Endothelial cell of umbilical vein (primary cell): ENCODE measurements at regions of chr13 and their contacts with region 1.

Region 1: GRCh38 chr13:20160847-20161274 is at the start of gene GJA3:
- DNase-seq: no peak
- H3K4me3 ChIP-seq: peak within 1 kb of the TSS in 2 of 3 experiments; percentile 25 to 28
- H3K27ac ChIP-seq: no peak within 1 kb of the TSS
- H3K4me1 ChIP-seq: peaks cover 2% of the 10 kb centered on the region
- H3K27me3 ChIP-seq: peaks cover 40 to 71% of the 10 kb centered on the region in 2 experiments
- CTCF ChIP-seq: no peak
- POLR2A ChIP-seq: no peak
- total RNA-seq, gene GJA3: not detected in 2 replicates

Region 2: GRCh38 chr13:19822673-19823072 is 338.2 kb before region 1 on chr13:
- CTCF ChIA-PET with region 1: no interaction called
- POLR2A ChIA-PET with region 1: no interaction called
- dilution Hi-C with region 1: no loop called
- intact Hi-C with region 1: no loop called
- DNase-seq: no peak
- H3K4me3 ChIP-seq: no peak overlapping the region
- H3K27ac ChIP-seq: no peak overlapping the region
- H3K4me1 ChIP-seq: no peaks in the 10 kb centered on the region
- H3K27me3 ChIP-seq: no peaks in the 10 kb centered on the region
- CTCF ChIP-seq: no peak
- POLR2A ChIP-seq: no peak

Region 3: GRCh38 chr13:19927117-19927748 is 233.6 kb before region 1 on chr13:
- CTCF ChIA-PET with region 1: interaction called, 12 read pairs
- POLR2A ChIA-PET with region 1: no interaction called
- dilution Hi-C with region 1: no loop called
- intact Hi-C with region 1: loop called (anchors 1 kb)
- DNase-seq: peak; percentile 59
- H3K4me3 ChIP-seq: no peak overlapping the region
- H3K27ac ChIP-seq: no peak overlapping the region
- H3K4me1 ChIP-seq: no peaks in the 10 kb centered on the region
- H3K27me3 ChIP-seq: no peaks in the 10 kb centered on the region
- CTCF ChIP-seq: peak in 1 of 2 donors; percentile 30
- POLR2A ChIP-seq: no peak

Region 4: DNA sequence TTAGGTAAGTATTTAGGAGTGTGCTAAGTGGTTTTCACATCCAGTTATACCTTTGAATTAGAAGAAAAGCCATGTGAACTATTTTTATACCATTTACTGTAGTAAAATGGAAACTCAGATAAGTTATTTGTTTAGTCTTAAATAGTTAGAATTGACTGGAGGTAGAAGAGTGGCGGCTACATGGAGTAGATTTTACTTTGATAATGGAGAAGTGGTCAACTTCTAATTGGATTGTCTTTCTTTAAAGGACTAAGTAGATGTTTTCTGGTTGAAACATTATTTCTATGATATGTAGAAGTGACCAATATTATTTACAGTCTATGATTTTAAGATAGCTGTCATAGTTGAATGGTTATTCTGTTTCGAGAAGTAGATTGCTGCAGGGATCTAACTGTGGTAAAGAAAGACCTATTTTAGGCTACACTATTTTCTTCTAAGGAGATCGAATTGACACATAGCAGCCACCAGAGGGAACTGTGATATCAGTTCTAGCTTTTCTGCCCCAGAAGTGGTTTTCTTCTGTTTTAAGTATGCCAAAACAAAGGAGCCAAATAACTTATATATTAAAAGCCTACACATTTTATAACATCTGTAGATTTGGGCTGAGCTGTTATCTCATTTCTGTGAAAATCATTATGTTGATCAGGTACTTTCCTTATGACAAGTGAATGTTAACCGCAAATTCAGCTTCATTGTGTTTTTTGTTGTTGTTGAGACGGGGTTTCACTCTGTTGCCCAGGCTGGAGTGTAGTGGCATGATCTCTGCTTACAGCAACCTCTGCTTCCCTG is 176.2 kb before region 1 on chr13:
- CTCF ChIA-PET with region 1: interaction called, 18 read pairs
- POLR2A ChIA-PET with region 1: no interaction called
- dilution Hi-C with region 1: no loop called
- intact Hi-C with region 1: loop called (anchors 2 kb)
- DNase-seq: peak; percentile 45
- H3K4me3 ChIP-seq: no peak overlapping the region
- H3K27ac ChIP-seq: no peak overlapping the region
- H3K4me1 ChIP-seq: no peaks in the 10 kb centered on the region
- H3K27me3 ChIP-seq: no peaks in the 10 kb centered on the region
- CTCF ChIP-seq: peak; percentile 27 to 50
- POLR2A ChIP-seq: no peak

Region 5: DNA sequence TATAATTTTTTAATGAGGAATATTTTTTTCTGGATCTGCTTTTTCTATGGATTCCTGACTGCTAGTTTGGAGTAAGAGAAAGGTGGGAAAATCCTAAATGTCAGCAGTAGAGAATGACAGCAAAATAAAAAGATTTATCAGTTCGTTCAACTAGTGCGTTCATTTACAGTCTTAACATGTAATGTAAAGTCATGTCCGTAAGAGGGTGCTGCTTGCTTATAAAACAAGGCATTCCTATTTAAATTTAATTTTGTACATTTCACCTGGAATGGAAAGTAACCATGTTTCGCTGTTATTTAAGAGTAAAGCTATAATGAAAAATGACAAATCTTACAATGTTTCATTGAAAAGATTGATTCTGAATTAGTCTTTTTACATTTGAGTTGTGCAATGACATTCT is 125.7 kb before region 1 on chr13:
- CTCF ChIA-PET with region 1: no interaction called
- POLR2A ChIA-PET with region 1: no interaction called
- dilution Hi-C with region 1: no loop called
- intact Hi-C with region 1: loop called (anchors 1 kb)
- DNase-seq: no peak
- H3K4me3 ChIP-seq: no peak overlapping the region
- H3K27ac ChIP-seq: no peak overlapping the region
- H3K4me1 ChIP-seq: no peaks in the 10 kb centered on the region
- H3K27me3 ChIP-seq: no peaks in the 10 kb centered on the region
- CTCF ChIP-seq: no peak
- POLR2A ChIP-seq: no peak

Region 6: DNA sequence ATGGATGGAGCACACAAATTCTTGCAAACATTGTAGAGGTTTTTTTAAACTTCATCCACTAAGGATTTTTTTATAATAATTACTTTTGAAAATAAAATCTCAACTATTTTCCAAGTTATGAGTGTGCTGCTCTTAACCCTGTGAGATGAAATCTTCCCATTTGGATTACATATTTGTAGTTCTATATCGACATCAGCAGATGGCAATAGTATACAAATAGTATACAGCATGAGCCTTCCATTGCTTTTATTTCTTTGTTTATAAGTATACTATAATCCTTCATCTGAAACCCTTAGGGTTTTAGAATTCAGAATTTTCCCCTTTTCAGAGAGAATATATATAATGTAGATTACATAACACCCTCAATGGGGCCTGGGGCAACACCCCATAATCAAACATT is 70.5 kb before region 1 on chr13:
- CTCF ChIA-PET with region 1: interaction called, 3 read pairs
- POLR2A ChIA-PET with region 1: no interaction called
- dilution Hi-C with region 1: no loop called
- intact Hi-C with region 1: loop called (anchors 5 kb)
- DNase-seq: no peak
- H3K4me3 ChIP-seq: no peak overlapping the region
- H3K27ac ChIP-seq: no peak overlapping the region
- H3K4me1 ChIP-seq: no peaks in the 10 kb centered on the region
- H3K27me3 ChIP-seq: no peaks in the 10 kb centered on the region
- CTCF ChIP-seq: no peak
- POLR2A ChIP-seq: no peak

Region 7: DNA sequence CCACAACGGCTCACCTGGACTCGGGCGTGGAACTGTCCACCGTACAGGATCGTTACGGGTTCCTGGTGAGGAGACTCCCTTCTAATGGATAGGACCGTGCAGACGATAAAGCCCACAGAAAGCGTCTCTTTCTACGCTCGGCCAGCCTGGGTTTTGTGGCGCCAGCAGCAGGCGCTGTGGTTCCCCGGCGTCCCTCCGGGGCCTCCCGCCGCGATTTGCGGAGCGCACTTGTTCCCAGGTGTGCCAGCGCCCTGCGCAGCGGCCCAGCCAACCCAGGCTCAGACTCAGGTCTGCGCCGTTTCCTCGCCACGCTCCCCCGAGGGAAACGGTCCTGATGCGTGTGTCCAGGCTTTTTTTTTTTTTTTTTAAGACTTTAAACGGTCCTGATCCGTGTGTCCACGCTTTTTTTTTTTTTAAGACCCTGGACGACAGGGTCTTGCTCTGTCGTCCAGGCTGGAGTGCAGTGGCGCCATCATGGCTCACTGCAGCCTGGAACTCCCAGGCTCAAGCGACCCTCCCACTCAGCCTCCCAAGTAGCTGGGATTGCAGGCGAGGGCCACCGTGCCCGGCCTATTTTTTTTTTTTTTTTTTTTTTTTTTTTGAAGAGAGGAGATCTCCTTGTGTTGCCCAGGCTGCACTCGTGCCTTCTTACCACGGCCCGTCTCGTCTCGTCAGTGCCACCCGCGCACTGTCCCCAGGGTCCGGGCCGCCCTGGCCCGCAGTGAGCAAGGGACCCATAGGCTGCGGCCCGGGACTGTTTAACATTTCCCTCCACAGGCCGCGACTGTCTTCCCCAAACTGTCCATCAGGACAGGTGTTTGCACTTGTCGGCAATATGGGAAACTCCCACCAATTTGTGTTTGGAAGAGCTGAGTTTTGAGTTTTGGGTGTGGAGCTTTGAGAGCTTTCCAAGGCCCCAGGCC is 23.8 kb before region 1 on chr13:
- CTCF ChIA-PET with region 1: interaction called, 3 read pairs
- POLR2A ChIA-PET with region 1: no interaction called
- dilution Hi-C with region 1: no loop called
- intact Hi-C with region 1: loop called (anchors 1 kb)
- DNase-seq: no peak
- H3K4me3 ChIP-seq: no peak overlapping the region
- H3K27ac ChIP-seq: no peak overlapping the region
- H3K4me1 ChIP-seq: no peaks in the 10 kb centered on the region
- H3K27me3 ChIP-seq: peaks cover 44 to 45% of the 10 kb centered on the region in 2 experiments
- CTCF ChIP-seq: peak; percentile 29 to 69
- POLR2A ChIP-seq: no peak

Region 8: DNA sequence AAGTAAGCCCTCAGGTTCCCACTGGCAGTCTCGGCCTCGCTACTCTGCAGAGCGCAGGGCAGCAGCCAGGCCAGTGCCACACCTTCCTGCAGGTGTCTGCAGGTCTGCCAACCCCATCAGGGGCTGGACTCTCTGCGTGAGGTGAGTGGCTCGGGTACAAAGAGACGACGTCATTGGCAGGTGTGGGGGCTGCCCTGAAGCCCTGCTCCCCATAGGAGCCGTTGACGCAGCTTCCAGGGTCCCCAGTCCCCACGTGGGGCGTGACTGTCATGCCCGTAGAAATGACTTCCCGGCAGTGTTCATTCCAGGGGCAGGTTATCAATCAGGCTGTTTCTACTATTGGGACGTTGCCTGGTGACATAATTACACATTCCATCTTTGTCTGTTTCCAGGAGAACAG is 86.5 kb after region 1 on chr13:
- CTCF ChIA-PET with region 1: no interaction called
- POLR2A ChIA-PET with region 1: no interaction called
- dilution Hi-C with region 1: no loop called
- intact Hi-C with region 1: no loop called
- DNase-seq: no peak
- H3K4me3 ChIP-seq: no peak overlapping the region
- H3K27ac ChIP-seq: no peak overlapping the region
- H3K4me1 ChIP-seq: no peaks in the 10 kb centered on the region
- H3K27me3 ChIP-seq: no peaks in the 10 kb centered on the region
- CTCF ChIP-seq: no peak
- POLR2A ChIP-seq: no peak